ENCODE measurements at regions of chr2 and their contacts with region 1.

Region 1: DNA sequence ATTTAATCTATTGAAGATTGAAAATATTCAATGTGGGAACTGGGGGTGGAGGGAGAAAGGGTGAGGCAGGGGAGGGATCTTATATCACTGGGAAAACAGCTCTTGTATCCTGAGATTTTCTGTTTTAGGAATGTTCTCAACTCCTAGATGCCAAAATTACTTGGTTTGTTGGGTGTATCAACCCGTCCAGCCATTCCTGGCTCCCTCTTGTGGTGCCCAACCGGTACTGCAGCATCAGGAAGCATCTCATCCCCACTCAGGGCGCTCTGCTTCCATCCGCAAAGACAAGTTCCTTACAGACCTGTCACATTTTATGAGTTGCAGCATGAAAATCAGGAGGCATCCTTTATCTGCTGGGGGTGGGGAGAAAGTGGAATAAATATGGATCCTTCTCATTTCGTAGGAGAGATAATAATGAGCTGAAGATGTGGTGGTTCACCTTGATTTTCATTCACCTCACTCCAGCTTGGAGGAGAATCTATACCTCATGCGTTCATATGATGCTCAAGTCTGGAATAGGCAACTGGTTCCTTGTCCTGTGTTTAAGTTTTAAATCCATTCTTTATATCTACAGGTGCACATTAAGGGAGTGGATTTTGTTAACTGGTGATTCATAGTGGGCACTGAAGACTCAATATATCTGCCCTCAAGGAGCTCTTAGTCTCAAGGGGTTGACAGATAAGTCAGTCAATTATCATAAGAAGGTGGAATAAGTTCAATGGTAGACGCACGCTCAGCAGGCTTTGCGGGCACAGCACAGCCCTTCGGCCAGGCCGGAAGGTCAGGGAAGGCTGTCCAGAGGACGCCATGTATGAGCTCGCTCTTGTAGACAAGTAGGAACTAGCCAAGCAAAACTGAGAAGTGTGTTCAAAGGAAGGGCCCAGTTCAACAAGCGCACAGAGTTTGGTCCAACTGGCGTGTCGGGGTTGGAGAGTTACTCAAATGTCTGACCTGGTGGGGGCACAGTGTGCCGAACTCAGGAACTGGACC is 127.3 kb downstream of the RNF144A start:
- DNase-seq: peak; percentile 75
- CTCF ChIP-seq: peak; percentile 85

Region 2: GRCh38 chr2:6764968-6765723 is 279.4 kb before region 1 on chr2:
- CTCF ChIA-PET with region 1: no interaction called
- POLR2A ChIA-PET with region 1: no interaction called
- DNase-seq: no peak
- CTCF ChIP-seq: no peak

Region 3: GRCh38 chr2:6896930-6897759 is 147.4 kb before region 1 on chr2:
- CTCF ChIA-PET with region 1: interaction called, 52 read pairs
- POLR2A ChIA-PET with region 1: no interaction called
- DNase-seq: peak; percentile 31
- CTCF ChIP-seq: peak; percentile 65

Region 4: GRCh38 chr2:6917071-6917760 is 127.3 kb before region 1 on chr2 and contains the start of gene RNF144A:
- CTCF ChIA-PET with region 1: interaction called, 18 read pairs
- POLR2A ChIA-PET with region 1: no interaction called
- DNase-seq: peak; percentile 88
- CTCF ChIP-seq: peak; percentile 73

Region 5: GRCh38 chr2:7014174-7014640 is 30.3 kb before region 1 on chr2:
- CTCF ChIA-PET with region 1: interaction called, 11 read pairs
- POLR2A ChIA-PET with region 1: no interaction called
- DNase-seq: peak; percentile 43
- CTCF ChIP-seq: peak; percentile 51

Region 6: GRCh38 chr2:7057865-7058400 is 13.4 kb after region 1 on chr2:
- CTCF ChIA-PET with region 1: interaction called, 42 read pairs
- POLR2A ChIA-PET with region 1: no interaction called
- DNase-seq: no peak
- CTCF ChIP-seq: no peak

Region 7: GRCh38 chr2:7097348-7097895 is 52.9 kb after region 1 on chr2:
- CTCF ChIA-PET with region 1: interaction called, 11 read pairs
- POLR2A ChIA-PET with region 1: no interaction called
- DNase-seq: peak; percentile 82
- CTCF ChIP-seq: peak; percentile 100

Region 8: DNA sequence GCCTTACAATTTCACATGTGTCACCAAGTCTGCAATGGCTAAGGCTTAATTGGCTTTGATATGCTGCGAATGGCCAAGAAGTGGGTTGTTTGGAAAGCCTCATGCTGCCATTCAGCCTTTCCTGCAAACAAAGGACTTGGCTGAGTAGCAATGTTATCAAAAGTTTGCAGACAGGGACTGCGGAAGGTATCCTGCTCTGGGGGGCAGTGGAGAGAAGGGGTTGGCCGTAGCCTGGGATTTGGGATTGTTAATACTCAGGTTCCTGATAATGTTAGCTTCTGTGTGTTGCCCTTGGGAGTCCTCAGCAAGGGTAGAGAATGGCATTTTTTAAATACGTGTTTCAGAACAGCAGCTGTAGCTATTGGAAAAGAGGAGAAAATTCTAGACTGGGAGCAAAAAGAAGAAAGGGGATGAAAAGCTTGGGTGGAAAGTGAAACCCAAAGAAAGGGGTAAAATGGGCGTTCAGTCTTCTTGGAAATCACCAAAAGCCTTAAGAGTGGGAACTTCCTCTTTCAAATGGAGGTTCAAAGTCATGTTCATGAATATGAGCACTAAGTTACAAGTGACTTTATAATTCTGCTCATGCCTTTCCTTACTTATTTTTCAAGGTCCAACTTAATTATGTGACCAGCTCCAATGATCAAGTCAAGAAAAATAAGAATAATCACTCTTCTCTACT is 197.8 kb after region 1 on chr2:
- CTCF ChIA-PET with region 1: no interaction called
- POLR2A ChIA-PET with region 1: no interaction called
- DNase-seq: no peak
- CTCF ChIP-seq: no peak